HEK293 (cell line): ENCODE measurements at regions of chr20 and their contacts with region 1.

Region 1: GRCh38 chr20:35883778-35884540 is 70.3 kb downstream of the SCAND1 start:
- H3K4me3 ChIP-seq: peak overlapping the region; percentile 36
- H3K27ac ChIP-seq: no peak overlapping the region
- H3K4me1 ChIP-seq: no peaks in the 10 kb centered on the region; the same call in 1 of the 2 replicates
- CTCF ChIP-seq: peak; percentile 83

Region 2: GRCh38 chr20:35511814-35512420 is 372.0 kb before region 1 on chr20:
- CTCF ChIA-PET with region 1: interaction called, 11 read pairs
- POLR2A ChIA-PET with region 1: no interaction called
- H3K4me3 ChIP-seq: no peak overlapping the region
- H3K27ac ChIP-seq: no peak overlapping the region
- H3K4me1 ChIP-seq: no peaks in the 10 kb centered on the region
- CTCF ChIP-seq: peak; percentile 67; the same call in 1 of the 2 replicates

Region 3: GRCh38 chr20:35871311-35871771 is 12.6 kb before region 1 on chr20:
- CTCF ChIA-PET with region 1: interaction called, 12 read pairs
- POLR2A ChIA-PET with region 1: interaction called, 3 read pairs
- H3K4me3 ChIP-seq: no peak overlapping the region
- H3K27ac ChIP-seq: peak overlapping the region; percentile 56; the same call in 1 of the 2 replicates
- H3K4me1 ChIP-seq: peaks cover 9% of the 10 kb centered on the region
- CTCF ChIP-seq: no peak

Region 4: DNA sequence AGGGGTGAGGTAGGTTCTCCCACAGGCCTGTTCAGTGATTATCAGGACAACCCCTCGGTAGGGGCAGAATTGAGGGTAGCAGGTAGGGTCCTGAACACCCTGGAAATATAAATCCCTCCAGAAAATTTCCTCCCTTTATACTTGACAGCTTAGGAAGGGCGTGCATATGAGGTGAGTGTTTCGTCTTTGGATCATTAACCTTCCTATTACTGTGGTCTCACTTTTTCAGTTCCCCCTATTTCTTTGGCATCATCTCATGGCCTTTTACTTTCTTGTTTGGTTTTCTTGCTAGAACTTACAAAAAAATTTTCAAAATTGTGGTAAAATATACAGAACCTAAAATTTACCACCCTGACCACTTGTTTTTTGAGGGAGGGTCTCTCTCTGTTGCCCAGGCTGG is 251.9 kb after region 1 on chr20:
- CTCF ChIA-PET with region 1: no interaction called
- POLR2A ChIA-PET with region 1: no interaction called
- H3K4me3 ChIP-seq: no peak overlapping the region
- H3K27ac ChIP-seq: no peak overlapping the region
- H3K4me1 ChIP-seq: no peaks in the 10 kb centered on the region
- CTCF ChIP-seq: no peak